H1 (cell line): ENCODE measurements at regions of chr1 and their contacts with region 1.

Region 1: DNA sequence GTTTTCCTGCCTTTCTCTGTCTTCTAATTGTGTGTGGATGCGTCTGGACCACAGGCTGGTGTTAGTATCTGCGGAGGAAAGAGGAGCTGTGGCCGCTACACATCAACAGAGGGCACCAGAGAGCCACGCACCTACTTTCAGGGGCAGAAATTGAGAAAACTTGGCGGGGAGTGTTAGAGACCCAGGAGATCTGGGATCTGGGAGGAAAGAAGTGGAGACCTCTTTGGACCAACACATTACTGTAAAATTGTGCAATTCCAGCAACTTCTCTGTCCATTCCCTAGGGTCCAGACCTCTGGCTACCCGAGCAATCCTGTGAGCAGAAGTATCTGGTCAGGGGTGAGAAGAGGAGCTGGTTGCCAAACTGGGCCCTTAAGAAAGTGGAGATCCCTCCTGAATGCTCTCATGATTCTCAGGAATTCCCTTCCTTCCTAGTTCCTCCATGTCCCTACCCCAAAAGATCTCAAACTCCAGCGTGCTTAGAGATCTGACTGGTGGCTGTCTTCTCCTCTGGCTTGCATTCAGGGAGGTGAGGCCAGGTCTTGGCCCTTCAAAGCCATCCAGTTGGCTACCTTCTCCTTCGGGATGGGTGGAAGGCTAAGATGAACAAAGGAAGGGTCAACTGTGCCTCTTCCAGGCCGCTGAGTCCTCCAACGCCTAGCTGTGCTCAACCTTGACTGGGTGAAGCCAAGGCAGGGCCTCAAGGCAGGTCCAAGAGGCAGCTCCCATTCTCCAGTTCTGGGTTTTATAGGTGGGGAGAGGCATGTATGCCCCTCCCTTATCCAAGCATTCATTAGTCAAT is 1.2 kb upstream of the KIRREL1 start:
- DNase-seq: peak in 1 of 2 experiments; percentile 86
- H3K4me3 ChIP-seq: peak overlapping the region in 1 of 4 experiments; percentile 99; a peak in 1 of 8 replicates
- H3K27ac ChIP-seq: no peak overlapping the region
- H3K4me1 ChIP-seq: peaks cover 16 to 32% (median 22%) of the 10 kb centered on the region in 4 experiments
- H3K27me3 ChIP-seq: peaks cover 0 to 5% (median 0%) of the 10 kb centered on the region in 4 experiments; a peak in 3 of 7 replicates
- CTCF ChIP-seq: peak; percentile 90 to 97 (median 95)
- EP300 ChIP-seq: no peak
- POLR2A ChIP-seq: no peak
- RAD21 ChIP-seq: peak; percentile 96 to 98

Region 2: GRCh38 chr1:157856538-157856937 is 135.7 kb before region 1 on chr1:
- CTCF ChIA-PET with region 1: no interaction called
- POLR2A ChIA-PET with region 1: no interaction called
- DNase-seq: no peak
- H3K4me3 ChIP-seq: no peak overlapping the region
- H3K27ac ChIP-seq: no peak overlapping the region
- H3K4me1 ChIP-seq: no peaks in the 10 kb centered on the region
- H3K27me3 ChIP-seq: no peaks in the 10 kb centered on the region
- CTCF ChIP-seq: no peak
- EP300 ChIP-seq: no peak
- POLR2A ChIP-seq: no peak
- RAD21 ChIP-seq: no peak

Region 3: DNA sequence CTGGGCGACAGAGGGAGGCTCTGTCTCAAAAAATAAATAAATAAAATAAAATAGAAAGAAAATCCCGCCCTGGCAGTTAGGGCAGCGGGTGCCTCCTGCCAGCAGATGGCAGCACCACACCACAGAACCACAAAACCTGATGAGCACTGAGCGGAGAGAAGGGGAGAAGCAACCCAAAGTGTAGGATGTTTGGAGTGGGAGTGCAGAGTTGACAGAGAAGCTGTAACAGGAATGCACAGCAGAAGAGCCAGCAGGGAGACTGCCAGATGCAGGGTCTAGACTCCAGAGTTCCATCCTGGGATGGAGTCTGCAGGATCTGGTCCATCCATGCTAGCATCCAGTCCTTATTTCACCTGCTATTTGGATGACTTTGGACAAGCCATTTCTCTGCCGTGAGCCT is 28.5 kb before region 1 on chr1:
- CTCF ChIA-PET with region 1: interaction called, 656 read pairs
- POLR2A ChIA-PET with region 1: interaction called, 4 read pairs
- DNase-seq: peak; percentile 17 to 86
- H3K4me3 ChIP-seq: no peak overlapping the region
- H3K27ac ChIP-seq: no peak overlapping the region
- H3K4me1 ChIP-seq: peaks cover 0 to 8% (median 1%) of the 10 kb centered on the region in 4 experiments; a peak in 3 of 7 replicates
- H3K27me3 ChIP-seq: peaks cover 0 to 2% (median 0%) of the 10 kb centered on the region in 4 experiments; a peak in 1 of 7 replicates
- CTCF ChIP-seq: peak; percentile 75 to 95 (median 76)
- EP300 ChIP-seq: no peak
- POLR2A ChIP-seq: no peak
- RAD21 ChIP-seq: peak; percentile 96 to 97

Region 4: GRCh38 chr1:158013840-158014730 is 21.9 kb after region 1 on chr1:
- CTCF ChIA-PET with region 1: interaction called, 1,615 read pairs
- POLR2A ChIA-PET with region 1: interaction called, 94 read pairs
- DNase-seq: no peak
- H3K4me3 ChIP-seq: peak overlapping the region in 1 of 4 experiments; percentile 11; a peak in 3 of 8 replicates
- H3K27ac ChIP-seq: no peak overlapping the region
- H3K4me1 ChIP-seq: peaks cover 13 to 44% (median 35%) of the 10 kb centered on the region in 4 experiments
- H3K27me3 ChIP-seq: no peaks in the 10 kb centered on the region
- CTCF ChIP-seq: no peak
- EP300 ChIP-seq: no peak
- POLR2A ChIP-seq: no peak
- RAD21 ChIP-seq: no peak

Region 5: GRCh38 chr1:158035976-158036583 is 43.8 kb after region 1 on chr1:
- CTCF ChIA-PET with region 1: interaction called, 1,615 read pairs
- POLR2A ChIA-PET with region 1: interaction called, 4 read pairs
- DNase-seq: no peak
- H3K4me3 ChIP-seq: no peak overlapping the region
- H3K27ac ChIP-seq: no peak overlapping the region; the same call in 1 of the 2 replicates
- H3K4me1 ChIP-seq: peaks cover 3 to 12% (median 7%) of the 10 kb centered on the region in 4 experiments
- H3K27me3 ChIP-seq: no peaks in the 10 kb centered on the region
- CTCF ChIP-seq: peak in 2 of 3 experiments; percentile 57 to 65; a peak in 3 of 4 replicates
- EP300 ChIP-seq: no peak
- POLR2A ChIP-seq: no peak
- RAD21 ChIP-seq: peak; percentile 51 to 61

Region 6: GRCh38 chr1:158067662-158068061 is 75.4 kb after region 1 on chr1:
- CTCF ChIA-PET with region 1: interaction called, 49 read pairs
- POLR2A ChIA-PET with region 1: no interaction called
- DNase-seq: no peak
- H3K4me3 ChIP-seq: no peak overlapping the region
- H3K27ac ChIP-seq: no peak overlapping the region
- H3K4me1 ChIP-seq: peaks cover 0 to 17% (median 6%) of the 10 kb centered on the region in 4 experiments; a peak in 5 of 7 replicates
- H3K27me3 ChIP-seq: no peaks in the 10 kb centered on the region
- CTCF ChIP-seq: no peak
- EP300 ChIP-seq: no peak
- POLR2A ChIP-seq: no peak
- RAD21 ChIP-seq: no peak